Activated T-helper 2 cell treated with anti-CD3 and anti-CD28 coated beads, Interferon-gamma antibody, Interleukin-2, Interleukin-4, amounts not matched to agents 10 μg/mL and 5 μg/mL and 100 μg/mL, durations not matched to agents 14 hours and 24 hours and 36 hours (primary cell): ENCODE measurements at regions of chr16 and their contacts with region 1.

Region 1: DNA sequence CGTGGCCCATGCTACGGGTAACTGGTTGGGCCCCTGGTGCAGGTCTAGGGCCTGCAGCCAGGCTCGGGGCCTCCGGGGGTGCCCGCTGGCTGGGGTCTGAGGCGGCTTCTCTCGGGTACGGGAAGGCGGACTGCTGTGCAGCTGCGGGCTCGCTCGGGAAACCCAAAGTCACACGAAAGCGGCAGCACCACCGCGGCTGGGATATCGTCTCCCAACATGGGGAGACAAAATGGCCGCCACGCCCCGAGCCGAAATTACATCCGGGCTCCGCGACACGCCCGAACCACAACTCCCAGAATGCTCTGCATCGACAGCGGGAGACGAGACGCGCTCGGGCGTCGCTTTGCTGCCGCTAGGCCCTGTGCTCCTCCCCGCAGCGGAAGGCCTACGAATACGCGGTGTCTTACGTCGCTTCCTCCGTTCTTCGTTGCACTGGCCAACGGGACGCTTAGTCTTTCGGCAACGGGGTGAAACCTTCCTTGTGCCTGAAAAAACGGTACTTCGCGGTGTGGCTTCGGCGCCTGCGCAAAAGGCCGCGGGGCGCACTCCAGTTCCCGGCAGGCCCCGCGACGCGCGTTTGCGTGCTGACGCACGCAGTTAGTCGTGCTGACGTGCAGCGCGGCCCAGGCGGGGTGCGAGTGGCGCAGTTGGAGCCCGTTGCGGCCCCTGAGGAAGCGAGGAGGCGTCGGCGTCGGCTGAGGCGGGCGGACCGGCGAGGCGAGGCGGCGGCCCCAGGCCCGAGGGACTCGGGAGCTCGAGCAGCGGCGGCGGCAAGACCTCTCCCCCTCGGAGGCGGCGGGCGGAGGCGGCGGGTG is at the start of gene SRRM2:
- DNase-seq: peak; percentile 95
- H3K4me3 Mint-ChIP-seq: peak within 1 kb of the TSS; percentile 94
- H3K27ac Mint-ChIP-seq: peak within 1 kb of the TSS; percentile 99
- H3K4me1 Mint-ChIP-seq: peaks cover 46% of the 10 kb centered on the region
- H3K27me3 Mint-ChIP-seq: no peaks in the 10 kb centered on the region
- total RNA-seq, gene SRRM2: 694 and 701 TPM in 2 replicates

Region 2: GRCh38 chr16:2673066-2673999 is 78.9 kb before region 1 on chr16:
- intact Hi-C with region 1: loop called (anchors 2 kb)
- DNase-seq: peak; percentile 94
- H3K4me3 Mint-ChIP-seq: peak overlapping the region; percentile 82
- H3K27ac Mint-ChIP-seq: peak overlapping the region; percentile 71
- H3K4me1 Mint-ChIP-seq: peaks cover 30% of the 10 kb centered on the region
- H3K27me3 Mint-ChIP-seq: no peaks in the 10 kb centered on the region

Region 3: DNA sequence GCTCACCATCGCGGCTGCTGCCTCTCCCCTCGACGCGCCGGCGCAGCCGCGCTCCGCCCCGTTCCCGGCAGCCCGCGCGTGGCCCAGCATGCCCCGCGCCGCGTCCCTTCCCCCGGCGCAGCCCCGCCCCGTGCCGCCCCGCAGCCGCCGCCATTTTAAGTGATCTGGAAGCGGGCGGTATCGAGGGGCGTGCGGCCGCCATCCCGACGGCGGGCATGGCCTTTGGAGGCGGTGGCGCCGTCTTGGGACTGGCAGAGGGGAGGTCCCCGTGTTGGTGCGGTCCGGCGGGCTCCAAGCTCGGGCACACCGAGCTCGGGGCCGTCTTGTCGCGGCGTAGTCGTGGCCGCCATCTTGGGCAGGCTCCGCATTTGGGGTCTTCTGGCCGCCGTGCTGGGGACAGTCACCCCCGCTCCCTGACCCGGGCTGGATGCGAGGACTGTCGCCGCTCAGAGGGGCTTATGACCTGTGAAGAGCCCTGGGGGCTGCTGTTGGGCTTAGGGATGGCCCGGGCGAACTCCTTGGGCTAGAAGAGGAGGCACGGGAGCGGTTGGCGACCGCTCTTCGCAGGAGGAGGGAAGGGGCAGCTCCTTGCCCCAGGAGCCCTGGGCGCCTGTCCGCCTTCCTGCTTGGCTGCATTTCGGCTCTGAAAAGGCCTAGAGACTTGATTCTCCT is 25.1 kb after region 1 on chr16 and contains the start of gene ELOB:
- intact Hi-C with region 1: loop called (anchors 1 kb)
- DNase-seq: peak; percentile 84
- H3K4me3 Mint-ChIP-seq: peak within 1 kb of the TSS; percentile 97
- H3K27ac Mint-ChIP-seq: peak within 1 kb of the TSS; percentile 93
- H3K4me1 Mint-ChIP-seq: peaks cover 15% of the 10 kb centered on the region
- H3K27me3 Mint-ChIP-seq: no peaks in the 10 kb centered on the region
- total RNA-seq, gene ELOB: 242 and 252 TPM in 2 replicates

Region 4: GRCh38 chr16:2867987-2868789 is 115.9 kb after region 1 on chr16:
- intact Hi-C with region 1: loop called (anchors 10 kb)
- DNase-seq: peak; percentile 90
- H3K4me3 Mint-ChIP-seq: peak overlapping the region; percentile 91
- H3K27ac Mint-ChIP-seq: peak overlapping the region; percentile 90
- H3K4me1 Mint-ChIP-seq: peaks cover 10% of the 10 kb centered on the region
- H3K27me3 Mint-ChIP-seq: no peaks in the 10 kb centered on the region